Panc1 (cell line): ENCODE measurements at regions of chr18 and their contacts with region 1.

Region 1: GRCh38 chr18:37516361-37516853 is 49.2 kb downstream of the CELF4 start:
- DNase-seq: no peak
- ATAC-seq: no peak
- H3K4me3 ChIP-seq: no peak overlapping the region
- H3K27ac ChIP-seq: no peak overlapping the region
- H3K4me1 ChIP-seq: no peaks in the 10 kb centered on the region
- H3K27me3 ChIP-seq: no peaks in the 10 kb centered on the region; the same call in 1 of the 2 replicates
- CTCF ChIP-seq: no peak

Region 2: GRCh38 chr18:37407571-37407970 is 108.8 kb before region 1 on chr18:
- CTCF ChIA-PET with region 1: no interaction called
- POLR2A ChIA-PET with region 1: interaction called, 10 read pairs
- in situ Hi-C with region 1: no loop called
- intact Hi-C with region 1: no loop called
- DNase-seq: no peak
- ATAC-seq: no peak
- H3K4me3 ChIP-seq: no peak overlapping the region
- H3K27ac ChIP-seq: no peak overlapping the region
- H3K4me1 ChIP-seq: no peaks in the 10 kb centered on the region
- H3K27me3 ChIP-seq: no peaks in the 10 kb centered on the region
- CTCF ChIP-seq: no peak